ENCODE measurements at regions of chr17 and their contacts with region 1.

Region 1: DNA sequence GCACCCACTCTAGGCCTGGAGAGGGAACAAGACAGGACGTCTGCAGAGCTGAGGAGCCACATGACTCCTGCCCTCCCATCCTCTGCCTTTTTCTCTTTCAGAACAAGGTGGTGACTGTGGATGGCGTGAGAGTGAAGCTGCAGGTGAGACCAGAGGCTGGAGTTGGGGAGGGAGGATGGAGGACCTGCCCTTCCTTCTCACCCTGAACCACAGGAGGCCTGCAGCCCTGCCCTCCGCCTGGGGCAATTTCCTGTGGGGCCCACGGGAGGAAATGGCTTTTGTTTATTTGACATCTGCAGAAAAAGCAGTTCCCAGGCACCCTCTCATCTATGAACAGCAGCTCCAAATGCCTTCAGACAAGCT is 5.1 kb downstream of the RAB37 start:
- DNase-seq: peak; percentile 88
- ATAC-seq: peak; percentile 30
- H3K4me3 Mint-ChIP-seq: peak overlapping the region; percentile 43
- H3K27ac Mint-ChIP-seq: peak overlapping the region; percentile 91
- H3K4me1 Mint-ChIP-seq: peaks cover 84% of the 10 kb centered on the region
- H3K27me3 Mint-ChIP-seq: no peaks in the 10 kb centered on the region

Region 2: DNA sequence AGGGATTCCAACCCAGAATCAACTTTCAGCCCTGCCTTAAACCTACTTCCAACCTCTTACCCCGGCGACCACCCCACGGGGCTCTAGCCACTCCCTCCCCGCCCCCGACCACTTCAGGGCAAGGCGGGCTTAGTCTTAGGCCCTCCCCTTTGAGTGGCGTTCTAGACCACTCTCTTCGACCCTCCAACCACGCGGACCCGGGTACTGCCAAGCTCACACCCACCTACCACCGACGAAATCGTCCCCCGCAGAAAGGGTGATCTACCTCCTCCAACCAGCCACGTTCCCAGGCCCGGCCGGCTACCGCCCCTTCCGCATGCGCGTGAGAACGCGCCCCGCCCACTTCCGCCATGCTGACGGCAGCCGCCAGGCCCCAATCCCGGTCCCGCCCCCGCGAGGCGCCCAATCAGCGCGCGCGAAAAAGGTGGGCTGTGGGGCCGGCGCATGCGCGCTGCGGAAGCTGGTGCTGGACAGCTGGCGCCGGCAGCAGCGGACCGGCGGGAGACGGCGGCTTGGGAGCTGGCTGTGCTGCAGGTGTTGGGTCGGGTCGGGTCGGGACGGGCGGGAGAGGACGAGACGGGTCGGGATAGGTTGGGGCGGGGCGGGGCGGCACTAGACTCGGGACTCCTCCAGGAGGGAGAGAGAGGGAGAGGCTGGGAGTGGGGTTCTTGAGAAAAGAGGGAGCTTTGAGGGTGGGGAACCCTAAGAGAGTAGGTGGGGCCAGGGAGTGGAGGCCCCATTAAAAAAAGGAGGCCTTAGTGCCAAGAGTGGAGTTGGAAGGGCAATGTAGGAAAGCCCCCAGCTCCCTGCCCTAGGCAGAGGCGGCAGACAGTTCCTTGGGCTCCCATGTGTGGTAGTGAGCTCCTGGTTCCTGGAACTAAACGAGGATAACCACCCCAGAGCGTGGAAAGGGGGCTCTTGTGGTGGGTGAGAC is 34.2 kb after region 1 on chr17 and contains the start of gene NAT9:
- CTCF ChIA-PET with region 1: interaction called, 92 read pairs
- DNase-seq: peak; percentile 98
- ATAC-seq: peak; percentile 85
- H3K4me3 Mint-ChIP-seq: peak within 1 kb of the TSS; percentile 99
- H3K27ac Mint-ChIP-seq: peak within 1 kb of the TSS; percentile 86
- H3K4me1 Mint-ChIP-seq: peaks cover 62% of the 10 kb centered on the region
- H3K27me3 Mint-ChIP-seq: no peaks in the 10 kb centered on the region
- total RNA-seq, gene NAT9: 34.1 to 34.5 TPM

Region 3: GRCh38 chr17:74798239-74798707 is 56.1 kb after region 1 on chr17:
- CTCF ChIA-PET with region 1: no interaction called
- DNase-seq: no peak
- ATAC-seq: no peak
- H3K4me3 Mint-ChIP-seq: no peak overlapping the region
- H3K27ac Mint-ChIP-seq: no peak overlapping the region
- H3K4me1 Mint-ChIP-seq: peaks cover 6% of the 10 kb centered on the region
- H3K27me3 Mint-ChIP-seq: no peaks in the 10 kb centered on the region

Measured in activated CD8-positive, alpha-beta memory T cell treated with anti-CD3 and anti-CD28 coated beads, Interleukin-2, amount 10 ng/mL, durations not matched to agents 7 days and 5 days (primary cell).